Activated CD4-positive, alpha-beta T cell treated with anti-CD3 and anti-CD28 coated beads, Interleukin-2, amount 10 ng/mL, durations not matched to agents 7 days and 5 days (primary cell): ENCODE measurements at regions of chr2 and their contacts with region 1.

Region 1: DNA sequence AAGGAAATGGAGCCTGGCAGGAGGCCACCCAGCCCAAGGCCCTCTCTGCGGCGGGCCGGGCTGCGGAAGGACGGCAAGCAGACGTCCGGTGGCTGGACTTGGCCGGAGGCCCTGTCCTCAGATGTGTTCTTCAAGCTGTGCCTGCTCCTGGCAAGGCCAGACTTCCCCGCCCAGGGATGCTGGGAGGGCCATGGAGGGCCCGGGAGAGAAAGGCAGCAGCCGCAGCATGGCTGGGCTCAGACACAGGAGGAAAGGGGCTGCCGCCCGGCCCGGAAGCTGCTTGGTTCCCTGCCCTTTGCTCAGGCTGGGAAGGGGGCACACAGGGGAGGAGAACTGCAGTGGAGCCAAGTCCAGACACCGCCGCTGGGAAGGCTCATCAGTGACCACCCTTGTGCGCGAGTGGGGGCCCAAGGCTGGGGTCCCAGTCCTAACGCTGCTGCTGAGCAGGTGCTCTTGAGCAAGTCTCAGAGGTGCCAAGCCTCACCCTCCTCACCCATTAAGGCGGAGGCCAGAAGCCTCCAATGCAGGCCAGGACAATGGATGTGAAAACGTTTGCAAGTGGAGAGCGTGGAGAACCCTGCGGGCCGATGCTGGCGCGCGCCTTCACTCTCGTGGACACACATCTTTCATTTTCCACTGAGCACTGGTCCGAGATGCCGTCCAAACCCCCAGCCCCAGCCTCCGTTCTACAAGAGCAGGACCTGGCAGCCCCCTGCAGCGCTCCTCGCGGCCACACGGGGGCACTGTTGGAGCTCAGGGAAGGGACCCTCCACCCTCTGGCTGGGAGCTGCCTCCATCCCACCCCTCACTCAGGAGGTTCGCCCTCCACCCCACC is 7.9 kb downstream of the CROCC2 start:
- DNase-seq: peak; percentile 60
- H3K4me3 Mint-ChIP-seq: no peak overlapping the region
- H3K27ac Mint-ChIP-seq: no peak overlapping the region
- H3K4me1 Mint-ChIP-seq: no peaks in the 10 kb centered on the region
- H3K27me3 Mint-ChIP-seq: peaks cover 12% of the 10 kb centered on the region

Region 2: GRCh38 chr2:240926516-240927389 is 12.7 kb after region 1 on chr2:
- CTCF ChIA-PET with region 1: interaction called, 10 read pairs
- POLR2A ChIA-PET with region 1: no interaction called
- DNase-seq: no peak
- H3K4me3 Mint-ChIP-seq: no peak overlapping the region
- H3K27ac Mint-ChIP-seq: no peak overlapping the region
- H3K4me1 Mint-ChIP-seq: no peaks in the 10 kb centered on the region
- H3K27me3 Mint-ChIP-seq: no peaks in the 10 kb centered on the region